Activated CD8-positive, alpha-beta T cell treated with anti-CD3 and anti-CD28 coated beads for 36 hours (primary cell): ENCODE measurements at regions of chr9 and their contacts with region 1.

Region 1: DNA sequence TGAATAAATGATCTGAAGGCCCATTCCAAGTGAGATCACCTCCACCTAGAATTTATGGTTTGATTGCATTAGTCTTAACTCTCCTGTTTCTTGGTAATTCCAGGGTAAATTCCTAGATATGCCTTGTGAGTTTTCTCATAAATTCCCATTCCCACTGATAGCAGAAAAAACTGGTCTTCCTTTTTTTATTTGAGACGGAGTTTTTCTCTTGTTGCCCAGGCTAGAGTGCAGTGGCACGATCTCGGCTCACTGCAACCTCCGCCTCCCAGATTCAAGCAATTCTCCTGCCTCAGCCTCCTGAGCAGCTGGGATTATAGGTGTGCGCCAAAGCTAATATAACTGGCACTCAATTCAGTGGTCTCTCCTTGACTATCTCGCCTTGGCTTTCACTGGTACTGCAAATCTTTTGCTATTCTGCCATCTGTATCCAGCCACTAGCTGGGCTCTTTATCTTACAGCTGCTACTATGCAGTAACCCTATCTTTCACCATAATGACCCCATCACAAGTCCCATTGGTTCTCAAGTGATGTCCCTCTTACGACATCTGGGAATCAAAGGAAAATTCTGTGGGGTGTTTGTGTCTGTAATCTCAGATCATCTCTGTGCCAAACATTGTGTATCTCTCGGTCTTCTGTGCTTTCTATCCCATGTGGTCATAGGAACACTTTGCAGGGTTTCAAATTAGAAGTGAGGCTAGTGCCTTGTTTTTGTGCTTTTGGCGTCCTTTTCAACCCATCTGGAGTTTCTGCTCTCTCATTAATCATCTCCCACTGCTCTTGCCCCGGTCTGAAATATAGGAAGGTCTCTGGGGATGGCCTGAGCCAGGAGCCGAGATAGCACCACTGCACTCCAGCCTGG is 14.4 kb downstream of the HNRNPK start:
- DNase-seq: no peak
- ATAC-seq: peak; percentile 17
- H3K4me3 Mint-ChIP-seq: no peak overlapping the region
- H3K27ac Mint-ChIP-seq: peak overlapping the region; percentile 34
- H3K4me1 Mint-ChIP-seq: peaks cover 17% of the 10 kb centered on the region
- H3K27me3 Mint-ChIP-seq: no peaks in the 10 kb centered on the region
- CTCF ChIP-seq: no peak

Region 2: DNA sequence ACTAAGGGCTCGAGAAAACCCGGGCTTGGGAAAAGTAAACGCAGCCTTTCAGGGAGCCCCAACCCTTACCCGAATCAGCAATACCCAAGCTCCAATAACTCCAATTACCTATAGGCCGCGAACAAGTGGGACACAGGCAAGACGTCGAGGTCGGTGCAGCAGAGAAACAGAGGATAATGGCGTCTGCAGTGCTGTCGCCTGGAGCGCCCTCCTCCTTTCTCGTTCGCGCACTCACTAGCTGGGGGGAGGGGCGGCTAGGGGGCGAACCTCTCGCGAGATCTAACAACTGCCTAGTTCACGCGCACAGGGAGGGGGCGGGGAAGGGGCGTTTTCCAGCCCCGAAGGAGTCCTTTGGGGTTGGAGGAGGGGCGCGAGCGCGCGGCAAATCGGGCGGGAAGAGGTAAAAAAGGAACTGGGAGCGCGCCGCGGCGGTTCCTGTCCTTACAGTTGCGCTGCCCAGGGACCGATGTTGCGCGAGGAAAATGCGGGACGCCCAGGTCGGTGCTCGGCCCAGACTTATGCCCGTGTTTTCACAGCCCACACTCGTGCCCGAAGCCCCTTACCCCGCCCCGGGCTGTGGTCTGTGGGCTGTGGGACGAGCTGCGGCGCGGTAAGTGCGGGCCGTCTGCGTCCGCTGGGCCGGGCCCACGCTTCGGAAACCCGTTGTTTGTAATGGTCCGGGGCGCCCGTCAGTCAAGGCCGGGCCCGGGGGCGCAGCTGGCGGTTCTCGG is 15.0 kb after region 1 on chr9 and contains the start of gene RMI1:
- CTCF ChIA-PET with region 1: interaction called, 4 read pairs
- POLR2A ChIA-PET with region 1: interaction called, 224 read pairs
- intact Hi-C with region 1: no loop called
- DNase-seq: peak; percentile 100
- ATAC-seq: peak; percentile 84
- H3K4me3 Mint-ChIP-seq: peak within 1 kb of the TSS; percentile 97
- H3K27ac Mint-ChIP-seq: peak within 1 kb of the TSS; percentile 97
- H3K4me1 Mint-ChIP-seq: peaks cover 39% of the 10 kb centered on the region
- H3K27me3 Mint-ChIP-seq: no peaks in the 10 kb centered on the region
- CTCF ChIP-seq: no peak
- total RNA-seq, gene RMI1: 20.1 to 20.6 TPM